ENCODE measurements at regions of chr11 and their contacts with region 1.

Region 1: GRCh38 chr11:19240420-19241259 is at the start of gene E2F8:
- DNase-seq: peak; percentile 98
- H3K4me3 Mint-ChIP-seq: peak within 1 kb of the TSS; percentile 96
- H3K27ac Mint-ChIP-seq: peak within 1 kb of the TSS; percentile 91
- H3K4me1 Mint-ChIP-seq: peaks cover 34% of the 10 kb centered on the region
- H3K27me3 Mint-ChIP-seq: peaks cover 9% of the 10 kb centered on the region
- total RNA-seq, gene E2F8: 27.4 and 29.0 TPM in 2 replicates

Region 2: DNA sequence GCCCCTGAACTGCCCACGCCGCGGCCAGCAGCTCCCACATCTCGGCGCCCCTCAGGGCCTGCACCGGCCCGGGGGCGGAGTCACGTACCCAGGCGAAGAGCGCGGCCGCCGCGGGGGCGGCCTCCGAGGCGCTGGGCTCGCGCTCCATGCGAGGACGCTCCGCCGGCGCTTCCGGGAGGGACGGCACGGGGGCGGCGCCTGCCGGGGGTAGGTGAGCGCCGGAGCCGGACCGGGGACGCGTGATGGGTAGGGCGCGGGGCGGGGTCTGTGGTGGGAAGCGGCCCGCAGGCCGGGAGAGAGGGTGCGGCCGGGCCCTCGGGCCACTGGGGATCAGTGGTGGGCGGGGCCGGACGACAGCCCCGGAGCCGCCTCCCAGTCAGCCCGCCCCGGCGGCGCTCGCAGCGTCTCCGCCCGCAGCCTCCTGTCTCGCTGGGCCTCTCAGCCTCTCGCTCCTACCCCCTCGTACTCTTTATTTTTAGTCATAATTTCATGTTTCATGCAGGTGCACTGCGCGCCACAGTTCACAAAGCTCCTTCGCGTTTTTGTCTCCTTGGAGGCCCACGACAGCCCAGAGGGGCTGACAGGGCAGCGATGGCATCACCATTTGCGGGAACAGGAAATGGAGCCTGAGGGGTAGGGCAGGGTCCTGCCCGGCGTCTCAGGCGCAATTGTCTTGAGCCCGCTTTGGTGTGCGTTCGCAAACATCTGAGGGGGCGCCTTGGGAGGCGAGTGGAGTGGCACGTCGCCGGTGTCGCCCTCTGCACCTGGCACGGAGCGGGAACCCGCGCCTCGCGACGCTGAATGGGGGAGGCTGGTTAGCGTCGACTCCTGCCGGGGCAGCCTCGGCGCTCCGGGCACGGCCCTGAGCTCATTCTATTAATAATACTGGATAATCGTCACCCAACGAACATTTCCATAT is 1227.5 kb before region 1 on chr11 and contains the start of gene SERGEF:
- intact Hi-C with region 1: loop called (anchors 2 kb)
- DNase-seq: peak; percentile 98
- H3K4me3 Mint-ChIP-seq: peak within 1 kb of the TSS; percentile 90
- H3K27ac Mint-ChIP-seq: peak within 1 kb of the TSS; percentile 92
- H3K4me1 Mint-ChIP-seq: peaks cover 37% of the 10 kb centered on the region
- H3K27me3 Mint-ChIP-seq: peaks cover 3% of the 10 kb centered on the region
- total RNA-seq, gene SERGEF: 26.2 and 35.8 TPM in 2 replicates

Region 3: GRCh38 chr11:18395735-18396504 is 844.7 kb before region 1 on chr11:
- intact Hi-C with region 1: loop called (anchors 10 kb)
- DNase-seq: peak; percentile 99
- H3K4me3 Mint-ChIP-seq: peak overlapping the region; percentile 97
- H3K27ac Mint-ChIP-seq: peak overlapping the region; percentile 98
- H3K4me1 Mint-ChIP-seq: peaks cover 54% of the 10 kb centered on the region
- H3K27me3 Mint-ChIP-seq: no peaks in the 10 kb centered on the region

Region 4: GRCh38 chr11:19076744-19077589 is 163.7 kb before region 1 on chr11:
- intact Hi-C with region 1: loop called (anchors 5 kb)
- DNase-seq: peak; percentile 89
- H3K4me3 Mint-ChIP-seq: no peak overlapping the region
- H3K27ac Mint-ChIP-seq: no peak overlapping the region
- H3K4me1 Mint-ChIP-seq: no peaks in the 10 kb centered on the region
- H3K27me3 Mint-ChIP-seq: peaks cover 18% of the 10 kb centered on the region

Region 5: DNA sequence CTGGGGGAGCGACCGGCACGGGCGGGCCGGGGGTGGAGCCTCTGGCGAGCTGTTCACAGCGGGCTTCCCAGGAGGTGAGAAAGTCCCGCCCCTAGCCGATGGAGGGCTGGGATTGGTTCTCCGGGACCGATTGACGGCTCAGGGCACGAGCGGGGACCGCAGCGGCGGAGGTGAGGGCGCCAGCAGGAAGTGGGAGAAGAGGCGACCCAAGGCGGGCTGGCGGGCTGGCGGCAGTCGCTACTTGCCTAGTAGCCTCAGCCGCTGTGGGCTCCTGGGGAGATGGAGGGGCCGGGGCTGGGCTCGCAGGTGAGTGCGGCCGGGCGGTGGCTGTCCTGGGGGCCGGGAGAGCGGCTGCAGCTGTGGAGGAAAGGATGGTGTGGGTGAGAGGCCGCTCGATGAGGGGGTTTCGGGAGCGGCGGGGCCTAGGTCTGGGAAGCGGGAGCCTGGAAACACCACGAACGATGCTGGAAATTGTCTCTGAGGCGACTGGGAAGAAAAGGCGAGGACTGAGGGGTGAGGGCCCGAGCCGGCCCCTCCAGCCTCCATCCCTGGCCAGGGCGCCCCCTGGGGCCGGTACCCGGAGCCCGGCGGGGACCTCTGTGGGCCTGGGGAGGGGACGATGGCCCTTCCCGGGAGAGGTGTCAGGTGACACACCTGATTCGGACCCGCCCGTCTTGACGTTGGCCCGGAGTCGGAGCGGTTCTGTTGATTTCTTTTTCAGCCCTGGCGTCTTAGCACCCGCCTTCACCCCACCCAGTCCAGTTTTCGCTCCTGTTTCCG is 123.5 kb before region 1 on chr11 and contains the start of gene ZDHHC13:
- intact Hi-C with region 1: loop called (anchors 2 kb)
- DNase-seq: peak; percentile 99
- H3K4me3 Mint-ChIP-seq: peak within 1 kb of the TSS; percentile 94
- H3K27ac Mint-ChIP-seq: peak within 1 kb of the TSS; percentile 93
- H3K4me1 Mint-ChIP-seq: peaks cover 43% of the 10 kb centered on the region
- H3K27me3 Mint-ChIP-seq: peaks cover 19% of the 10 kb centered on the region
- total RNA-seq, gene ZDHHC13: 24.8 and 28.1 TPM in 2 replicates

Region 6: DNA sequence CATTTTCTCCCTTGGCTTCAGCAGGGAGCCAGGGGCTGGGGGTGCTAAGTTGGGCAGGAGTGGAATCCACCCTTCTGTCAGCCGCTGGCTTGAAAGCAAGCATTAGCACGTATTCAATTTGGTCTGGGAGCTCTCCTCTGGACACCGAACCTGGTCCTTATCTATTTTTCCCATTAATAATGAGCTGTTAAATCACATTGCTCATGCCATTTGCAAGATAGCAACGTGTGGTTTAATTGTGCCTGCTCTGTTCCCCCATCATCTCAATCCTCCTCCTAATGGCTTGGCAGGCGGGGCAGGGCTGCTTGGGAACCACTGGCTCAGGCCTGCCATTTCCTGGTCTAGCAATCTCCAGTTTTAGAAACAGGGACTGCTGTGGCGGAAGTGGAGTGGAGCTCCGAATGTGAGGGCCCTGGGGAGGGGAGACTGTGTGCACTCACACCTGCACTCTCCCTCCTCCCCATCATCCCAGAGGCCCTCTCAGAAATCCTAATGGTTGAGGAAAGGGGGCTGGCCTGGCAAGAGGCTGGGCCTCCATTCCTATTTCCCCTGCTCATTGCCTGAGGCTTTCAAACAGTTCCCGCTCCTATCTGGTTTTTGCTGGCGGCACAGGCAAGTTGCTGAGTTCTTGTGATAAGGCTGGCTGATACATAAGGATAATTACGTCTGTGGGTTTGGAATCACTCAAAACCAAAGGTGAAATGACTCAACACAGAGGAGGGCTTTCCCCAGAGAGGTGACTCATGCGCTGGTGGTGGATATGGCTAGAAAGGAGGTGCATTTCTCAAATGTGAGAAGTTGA is 201.3 kb after region 1 on chr11:
- intact Hi-C with region 1: loop called (anchors 10 kb)
- DNase-seq: peak; percentile 74
- H3K4me3 Mint-ChIP-seq: no peak overlapping the region
- H3K27ac Mint-ChIP-seq: peak overlapping the region; percentile 65
- H3K4me1 Mint-ChIP-seq: peaks cover 14% of the 10 kb centered on the region
- H3K27me3 Mint-ChIP-seq: peaks cover 38% of the 10 kb centered on the region

Region 7: GRCh38 chr11:19712281-19713220 is 471.9 kb after region 1 on chr11 and contains the start of gene NAV2:
- intact Hi-C with region 1: loop called (anchors 2 kb)
- DNase-seq: peak; percentile 94
- H3K4me3 Mint-ChIP-seq: peak within 1 kb of the TSS; percentile 88
- H3K27ac Mint-ChIP-seq: peak within 1 kb of the TSS; percentile 83
- H3K4me1 Mint-ChIP-seq: peaks cover 21% of the 10 kb centered on the region
- H3K27me3 Mint-ChIP-seq: peaks cover 64% of the 10 kb centered on the region
- total RNA-seq, gene NAV2: 0.28 TPM in 1 of 2 replicates, not detected in the other